Mammary epithelial cell (primary cell): ENCODE measurements at regions of chr4 and their contacts with region 1.

Region 1: GRCh38 chr4:19358015-19358414 is 893.7 kb upstream of the SLIT2 start:
- DNase-seq: peak; percentile 92
- H3K4me3 ChIP-seq: no peak overlapping the region
- H3K27ac ChIP-seq: peak overlapping the region; percentile 59
- H3K4me1 ChIP-seq: peaks cover 6% of the 10 kb centered on the region
- H3K27me3 ChIP-seq: no peaks in the 10 kb centered on the region
- CTCF ChIP-seq: no peak

Region 2: DNA sequence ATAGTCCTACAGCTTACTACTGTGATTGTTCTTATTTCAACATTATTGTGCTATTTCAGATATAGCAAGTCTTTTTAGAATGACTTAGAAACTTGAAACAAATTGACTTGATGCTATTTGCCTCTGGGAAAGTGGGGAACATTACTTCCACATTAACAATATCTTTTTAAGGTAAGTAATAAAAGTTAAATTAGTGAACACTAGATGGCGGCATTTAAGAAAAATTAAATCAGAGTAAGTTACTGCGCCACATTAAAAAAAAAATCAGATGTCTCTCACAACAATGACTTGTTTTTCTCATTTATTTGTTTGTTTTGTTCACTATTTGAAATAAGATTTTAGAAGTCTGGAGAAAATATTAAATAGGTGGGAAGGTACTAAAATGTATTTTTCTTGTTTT is 133.2 kb before region 1 on chr4:
- CTCF ChIA-PET with region 1: no interaction called
- dilution Hi-C with region 1: no loop called
- in situ Hi-C with region 1: no loop called
- intact Hi-C with region 1: no loop called
- DNase-seq: no peak
- H3K4me3 ChIP-seq: no peak overlapping the region
- H3K27ac ChIP-seq: no peak overlapping the region
- H3K4me1 ChIP-seq: no peaks in the 10 kb centered on the region
- H3K27me3 ChIP-seq: no peaks in the 10 kb centered on the region
- CTCF ChIP-seq: peak in 1 of 2 donors; percentile 34

Region 3: DNA sequence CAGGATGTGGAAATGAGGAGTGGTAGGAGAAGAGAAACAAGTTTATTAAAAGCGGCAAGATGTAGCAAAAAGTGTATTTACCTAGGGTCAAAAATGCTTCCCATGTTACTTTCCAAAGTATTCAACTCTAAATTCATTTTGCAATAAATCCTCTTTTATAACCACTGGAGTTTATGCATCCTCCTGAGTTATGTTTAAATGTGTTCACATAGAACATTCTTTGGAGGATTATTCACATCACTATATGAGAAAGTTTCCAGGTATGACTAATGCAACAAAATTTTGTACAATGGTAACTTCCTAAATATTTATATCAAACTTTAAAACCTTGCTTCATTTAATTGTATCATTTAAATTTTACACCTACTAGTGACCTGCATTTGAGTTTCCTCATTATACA is 23.1 kb after region 1 on chr4:
- CTCF ChIA-PET with region 1: no interaction called
- dilution Hi-C with region 1: no loop called
- in situ Hi-C with region 1: no loop called
- intact Hi-C with region 1: loop called (anchors 2 kb)
- DNase-seq: peak; percentile 52
- H3K4me3 ChIP-seq: no peak overlapping the region
- H3K27ac ChIP-seq: peak overlapping the region; percentile 36
- H3K4me1 ChIP-seq: peaks cover 16% of the 10 kb centered on the region
- H3K27me3 ChIP-seq: no peaks in the 10 kb centered on the region
- CTCF ChIP-seq: no peak